ENCODE measurements at regions of chr1 and their contacts with region 1.

Region 1: DNA sequence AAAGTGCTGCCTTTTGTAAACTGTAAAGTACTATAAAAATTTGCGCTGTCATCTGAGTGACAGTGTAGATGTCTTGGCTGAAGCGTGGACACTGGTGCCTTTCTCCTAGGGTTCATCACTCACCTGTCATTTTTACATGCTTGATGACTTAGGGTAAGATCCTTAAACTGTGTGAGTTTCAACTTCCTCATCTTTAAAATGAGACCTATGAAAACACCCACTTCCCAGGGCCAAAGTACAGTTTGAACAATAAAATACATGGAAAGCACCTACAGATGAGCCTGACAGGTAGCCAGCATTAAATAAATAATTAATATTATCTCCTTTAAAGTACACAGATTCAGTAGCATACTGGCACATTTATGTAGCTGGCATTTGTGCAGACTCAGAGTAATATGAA is 309.9 kb downstream of the CHRM3 start:
- DNase-seq: no peak
- ATAC-seq: no peak
- H3K4me3 ChIP-seq: no peak overlapping the region
- H3K4me3 Mint-ChIP-seq: no peak overlapping the region
- H3K27ac ChIP-seq: no peak overlapping the region
- H3K27ac Mint-ChIP-seq: no peak overlapping the region
- H3K4me1 ChIP-seq: peaks cover 0 to 7% of the 10 kb centered on the region in 2 donors
- H3K4me1 Mint-ChIP-seq: peaks cover 4 to 16% (median 14%) of the 10 kb centered on the region in 7 donors
- H3K27me3 ChIP-seq: no peaks in the 10 kb centered on the region
- H3K27me3 Mint-ChIP-seq: no peaks in the 10 kb centered on the region

Region 2: DNA sequence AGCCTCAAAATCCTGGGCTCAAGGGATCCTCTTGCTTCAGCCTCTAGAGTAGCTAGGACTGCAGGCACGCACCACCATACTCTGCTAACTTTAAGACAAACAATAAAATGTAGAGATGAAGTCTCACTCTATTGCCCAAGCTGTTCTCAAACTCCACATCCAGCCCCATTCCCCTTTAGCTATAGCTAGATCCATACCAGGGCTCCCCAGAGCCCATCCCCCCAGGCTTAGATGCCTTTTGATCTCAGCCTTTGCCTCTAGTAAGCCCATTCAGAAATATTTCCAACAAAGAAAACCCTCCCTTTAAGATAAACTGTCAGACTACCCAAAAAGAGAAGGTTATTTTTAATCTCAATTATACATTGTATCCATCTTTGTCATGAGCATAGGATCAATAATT is 15.5 kb after region 1 on chr1:
- CTCF ChIA-PET with region 1: no interaction called
- POLR2A ChIA-PET with region 1: interaction called, 3 read pairs
- intact Hi-C with region 1: loop called in 1 of 2 experiments (anchors 2 kb)
- DNase-seq: no peak
- ATAC-seq: no peak
- H3K4me3 ChIP-seq: no peak overlapping the region
- H3K4me3 Mint-ChIP-seq: peak overlapping the region in 5 of 10 donors; percentile 11 to 47 (median 20)
- H3K27ac ChIP-seq: no peak overlapping the region
- H3K27ac Mint-ChIP-seq: peak overlapping the region in 7 of 9 donors; percentile 31 to 80 (median 65)
- H3K4me1 ChIP-seq: peaks cover under 1 to 29% of the 10 kb centered on the region in 2 donors
- H3K4me1 Mint-ChIP-seq: peaks cover 9 to 31% (median 21%) of the 10 kb centered on the region in 7 donors
- H3K27me3 ChIP-seq: no peaks in the 10 kb centered on the region
- H3K27me3 Mint-ChIP-seq: no peaks in the 10 kb centered on the region